Right ventricle myocardium inferior (tissue), 1 donor: ENCODE measurements at regions of chr13 and their contacts with region 1.

Region 1: DNA sequence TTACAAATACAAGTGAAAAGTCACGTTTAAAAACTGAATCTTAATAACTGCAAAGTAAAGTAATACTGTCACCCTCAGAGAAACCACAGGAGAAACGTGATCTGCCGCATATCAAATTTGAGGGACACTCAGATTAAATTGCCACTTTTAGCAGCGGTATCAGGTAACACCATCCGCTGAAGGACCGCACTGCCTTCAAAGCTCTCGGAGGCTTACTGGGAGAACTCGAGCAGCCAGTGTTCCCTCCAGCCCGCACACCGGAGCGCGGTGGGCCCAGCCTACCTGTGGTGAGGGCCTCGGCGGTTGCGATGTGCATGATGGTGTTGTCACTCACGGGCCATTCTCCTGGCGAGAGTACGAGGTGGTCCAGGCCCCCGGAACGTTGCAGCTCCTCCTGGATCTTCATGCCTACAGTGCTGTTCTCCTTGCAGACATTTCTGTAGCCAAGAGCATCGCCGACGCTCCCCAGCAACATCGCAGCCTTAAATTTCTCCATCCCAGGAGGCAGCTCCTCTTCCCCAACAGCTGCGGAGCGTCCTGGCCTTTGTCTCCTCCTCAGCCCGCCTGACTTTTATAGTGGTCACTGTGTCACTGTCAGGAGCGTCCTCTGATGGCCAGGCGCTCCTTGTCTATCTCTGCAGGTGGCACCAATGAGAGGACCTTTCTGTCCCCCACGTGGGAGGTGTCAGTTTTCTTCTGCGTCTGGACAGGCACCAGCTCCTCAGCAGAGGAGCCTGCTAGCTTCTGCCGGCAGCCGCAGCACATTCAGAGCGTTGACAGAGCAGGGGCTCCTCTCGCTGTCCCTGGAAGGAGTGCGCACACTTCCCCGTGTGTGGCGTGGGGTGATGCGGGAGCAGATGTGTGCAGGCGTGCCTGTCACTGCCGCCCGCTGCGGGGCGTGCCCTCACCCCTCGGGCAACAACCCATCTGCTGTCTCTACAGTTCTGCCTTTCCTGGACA is at the start of gene ADPRHL1:
- DNase-seq: no peak
- ATAC-seq: peak; percentile 77
- total RNA-seq, gene ADPRHL1: 468 TPM

Region 2: DNA sequence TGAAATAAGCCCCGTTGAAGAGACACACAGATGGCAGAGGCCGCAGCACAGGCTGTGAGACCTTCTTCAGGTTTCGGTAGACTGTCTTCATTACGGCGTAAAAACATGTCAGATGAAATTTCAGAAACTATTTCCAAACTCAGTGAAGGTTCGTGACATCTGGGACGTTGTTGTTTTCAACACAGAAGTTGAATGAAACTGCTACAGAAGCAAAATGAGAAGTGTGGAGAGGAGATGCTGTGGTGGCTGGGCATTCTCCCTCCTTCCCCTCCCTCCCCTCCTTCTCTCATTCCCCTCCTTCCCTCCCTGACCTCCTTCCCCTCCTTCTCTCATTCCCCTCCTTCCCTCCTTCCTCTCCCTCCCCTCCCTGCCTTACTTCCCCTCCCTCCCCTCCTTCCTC is 649.8 kb before region 1 on chr13:
- intact Hi-C with region 1: no loop called
- DNase-seq: no peak
- ATAC-seq: no peak

Region 3: GRCh38 chr13:113410472-113411201 is 42.6 kb before region 1 on chr13:
- intact Hi-C with region 1: loop called (anchors 5 kb)
- DNase-seq: no peak
- ATAC-seq: no peak

Region 4: DNA sequence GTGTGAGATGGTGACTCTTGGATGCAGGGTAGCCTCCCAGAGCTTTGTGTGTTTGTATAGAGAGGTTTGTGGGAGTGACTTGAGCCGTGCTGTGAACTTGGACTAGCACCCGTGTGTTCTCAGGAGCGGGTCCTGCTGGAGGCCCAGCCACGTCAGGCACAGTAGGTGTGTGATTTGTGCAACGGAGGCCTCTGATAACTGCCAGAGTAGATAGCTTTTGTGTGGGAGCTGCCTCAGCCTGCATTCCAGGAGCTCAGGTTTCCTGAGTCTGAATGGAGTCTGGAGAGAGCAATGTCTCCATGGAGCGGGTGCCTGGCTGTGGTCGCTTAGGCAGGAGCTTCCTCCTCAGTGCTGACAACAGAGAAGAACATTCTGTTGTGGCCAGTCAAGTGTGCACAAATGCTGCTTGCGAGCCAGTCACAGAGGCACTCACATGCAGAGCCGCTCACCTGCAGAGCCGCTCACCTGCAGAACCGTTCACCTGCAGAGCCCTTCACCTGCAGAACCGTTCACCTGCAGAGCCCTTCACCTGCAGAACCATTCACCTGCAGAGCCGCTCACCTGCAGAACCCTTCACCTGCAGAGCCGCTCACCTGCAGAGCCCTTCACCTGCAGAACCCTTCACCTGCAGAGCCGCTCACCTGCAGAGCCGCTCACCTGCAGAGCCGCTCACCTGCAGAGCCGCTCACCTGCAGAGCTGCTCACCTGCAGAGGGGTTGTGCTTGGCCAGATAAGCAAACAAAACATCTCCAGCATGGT is 163.9 kb after region 1 on chr13:
- intact Hi-C with region 1: no loop called
- DNase-seq: peak; percentile 45
- ATAC-seq: no peak